Ovary (tissue), 10 donors: ENCODE measurements at regions of chr19 and their contacts with region 1.

Region 1: GRCh38 chr19:54231077-54231931 is 8.5 kb upstream of the LILRB3 start:
- DNase-seq: peak; percentile 86 to 93 (median 90)
- H3K4me3 ChIP-seq: no peak overlapping the region
- H3K27ac ChIP-seq: no peak overlapping the region
- H3K4me1 ChIP-seq: no peaks in the 10 kb centered on the region
- H3K27me3 ChIP-seq: no peaks in the 10 kb centered on the region
- CTCF ChIP-seq: peak; percentile 67 to 90 (median 85)
- EP300 ChIP-seq: no peak
- POLR2A ChIP-seq: peak; percentile 23

Region 2: DNA sequence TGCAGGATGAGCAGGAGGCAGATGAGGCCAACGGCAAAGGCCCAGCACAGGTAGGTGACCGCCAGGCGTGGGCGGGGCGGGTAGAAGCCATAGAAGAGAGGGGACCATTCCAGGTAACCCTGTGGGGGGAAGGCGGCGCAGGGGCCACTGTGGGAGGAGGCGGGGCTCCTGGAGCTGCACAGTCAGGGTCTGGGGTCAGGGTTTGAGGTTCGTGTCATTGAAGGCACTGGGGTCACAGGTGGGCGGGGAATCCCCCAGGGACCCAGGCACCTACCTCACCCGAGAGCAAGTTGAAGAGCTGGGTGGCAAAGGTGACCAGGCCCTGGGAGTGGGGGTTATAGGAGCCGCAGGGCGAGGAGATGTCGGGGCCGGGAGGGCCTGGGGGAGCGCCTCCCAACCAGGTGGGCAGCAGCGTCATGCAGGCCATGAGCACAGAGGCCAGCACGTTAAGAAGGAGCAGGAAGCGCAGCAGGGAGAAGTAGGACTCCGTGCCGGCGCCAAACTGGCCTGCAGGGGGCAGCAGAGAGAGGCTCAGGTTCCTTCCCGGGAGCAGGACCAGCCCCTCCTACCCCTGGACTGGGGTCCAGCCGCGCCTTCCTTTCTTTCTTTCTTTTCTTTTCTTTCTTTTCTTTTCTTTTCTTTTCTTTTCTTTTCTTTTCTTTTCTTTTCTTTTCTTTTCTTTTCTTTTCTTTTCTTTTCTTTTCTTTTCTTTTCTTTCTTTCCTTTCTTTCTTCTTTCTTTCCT is 63.0 kb before region 1 on chr19:
- intact Hi-C with region 1: loop called (anchors 2 to 10 kb)
- DNase-seq: peak; percentile 87 to 96 (median 95)
- H3K4me3 ChIP-seq: no peak overlapping the region
- H3K27ac ChIP-seq: no peak overlapping the region
- H3K4me1 ChIP-seq: no peaks in the 10 kb centered on the region
- H3K27me3 ChIP-seq: no peaks in the 10 kb centered on the region
- CTCF ChIP-seq: peak; percentile 67 to 90 (median 79)
- EP300 ChIP-seq: no peak
- POLR2A ChIP-seq: no peak

Region 3: GRCh38 chr19:54179921-54180461 is 51.3 kb before region 1 on chr19:
- intact Hi-C with region 1: loop called in 1 of 4 experiments (anchors 10 kb)
- DNase-seq: no peak
- H3K4me3 ChIP-seq: no peak overlapping the region
- H3K27ac ChIP-seq: no peak overlapping the region
- H3K4me1 ChIP-seq: no peaks in the 10 kb centered on the region
- H3K27me3 ChIP-seq: no peaks in the 10 kb centered on the region
- CTCF ChIP-seq: no peak
- EP300 ChIP-seq: no peak
- POLR2A ChIP-seq: no peak